ENCODE measurements at regions of chr3 and their contacts with region 1.

Region 1: GRCh38 chr3:107633327-107634098 is 110.8 kb downstream of the BBX start:
- H3K4me3 Mint-ChIP-seq: no peak overlapping the region
- H3K27ac Mint-ChIP-seq: no peak overlapping the region
- H3K4me1 Mint-ChIP-seq: peaks cover 34% of the 10 kb centered on the region
- H3K27me3 Mint-ChIP-seq: no peaks in the 10 kb centered on the region

Region 2: DNA sequence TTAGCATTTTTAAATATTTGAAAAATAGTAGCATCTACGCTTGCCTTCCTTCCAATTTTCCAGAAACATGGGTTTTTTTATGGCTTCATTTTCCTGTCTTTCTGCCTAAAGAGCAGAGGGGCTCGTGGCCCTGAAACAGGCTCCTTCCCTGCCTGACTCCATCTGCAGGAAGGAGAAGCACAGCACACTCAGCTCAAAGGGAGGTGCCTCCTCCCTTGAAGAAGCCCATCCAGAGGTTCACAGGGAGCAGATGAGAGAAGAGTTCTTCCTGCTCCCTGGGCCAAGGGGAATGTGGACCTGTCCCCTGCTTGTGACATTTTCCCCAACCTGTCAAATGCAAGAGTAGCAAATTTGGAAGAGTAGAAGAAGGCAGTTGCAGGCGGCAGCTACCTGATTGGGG is 55.0 kb before region 1 on chr3:
- intact Hi-C with region 1: no loop called
- H3K4me3 Mint-ChIP-seq: no peak overlapping the region
- H3K27ac Mint-ChIP-seq: no peak overlapping the region
- H3K4me1 Mint-ChIP-seq: peaks cover 11% of the 10 kb centered on the region
- H3K27me3 Mint-ChIP-seq: no peaks in the 10 kb centered on the region

Region 3: GRCh38 chr3:107598926-107599771 is 34.4 kb before region 1 on chr3:
- intact Hi-C with region 1: loop called (anchors 5 kb)
- H3K4me3 Mint-ChIP-seq: peak overlapping the region; percentile 66
- H3K27ac Mint-ChIP-seq: peak overlapping the region; percentile 68
- H3K4me1 Mint-ChIP-seq: peaks cover 29% of the 10 kb centered on the region
- H3K27me3 Mint-ChIP-seq: no peaks in the 10 kb centered on the region

Region 4: DNA sequence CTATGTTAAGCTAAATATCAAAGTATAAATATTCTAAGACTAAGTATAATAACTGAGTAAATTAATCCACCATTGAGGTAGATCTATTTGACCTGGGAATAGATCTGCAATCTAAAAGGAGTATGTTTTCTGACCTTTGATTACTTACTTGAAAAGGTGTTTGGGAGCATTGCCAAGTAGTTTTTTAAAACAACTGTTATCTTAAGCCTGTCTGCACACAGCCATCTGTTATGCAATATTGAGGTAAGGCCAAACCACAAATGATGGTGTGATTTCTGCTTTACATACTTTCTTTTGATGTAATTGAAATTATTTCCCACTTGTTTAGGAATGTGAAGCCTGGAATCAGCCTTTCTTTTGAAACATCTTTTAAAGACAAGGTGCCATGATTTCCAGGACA is 163.2 kb after region 1 on chr3:
- intact Hi-C with region 1: no loop called
- H3K4me3 Mint-ChIP-seq: no peak overlapping the region
- H3K27ac Mint-ChIP-seq: no peak overlapping the region
- H3K4me1 Mint-ChIP-seq: peaks cover 10% of the 10 kb centered on the region
- H3K27me3 Mint-ChIP-seq: no peaks in the 10 kb centered on the region

Region 5: DNA sequence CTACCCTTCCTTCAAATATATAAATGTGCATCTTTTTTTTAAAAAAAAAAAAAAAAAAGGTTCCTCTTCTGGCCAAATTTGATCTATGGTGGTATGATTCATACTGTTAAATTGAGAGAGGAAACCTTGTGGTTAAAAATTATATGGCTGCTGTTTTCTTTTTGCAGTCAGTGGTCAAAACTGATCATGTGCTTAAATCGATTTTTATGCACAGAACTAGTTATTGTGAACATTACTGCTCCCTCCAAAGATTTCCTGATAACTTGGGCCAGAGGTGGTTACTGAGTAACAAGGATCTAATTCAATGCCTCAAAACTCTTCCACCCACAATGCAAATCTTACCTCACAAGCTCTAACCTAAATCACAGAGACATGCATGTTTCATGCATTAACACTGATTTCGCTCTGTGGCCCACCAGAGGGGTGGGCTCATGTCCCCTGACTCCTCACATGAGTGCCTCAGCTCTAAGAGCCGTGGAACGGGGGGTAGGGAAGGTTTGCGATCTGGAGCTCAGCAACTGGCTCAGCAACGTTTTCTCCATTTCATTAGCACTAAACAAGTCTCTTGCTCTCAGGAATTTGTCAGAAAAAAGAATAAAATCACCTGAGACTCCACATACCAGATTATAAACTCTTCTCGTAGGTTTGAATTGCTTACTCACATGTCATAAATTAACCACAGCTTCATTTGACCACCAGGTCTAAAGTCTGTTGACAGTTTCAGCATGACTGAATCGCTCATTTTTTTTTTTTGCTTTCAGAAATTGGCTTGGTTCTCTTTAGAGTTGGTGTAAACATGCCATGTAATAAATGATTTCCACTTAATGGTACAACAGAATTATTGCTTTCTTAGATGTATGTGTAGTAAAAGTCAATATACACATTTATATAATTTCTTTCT is 176.9 kb after region 1 on chr3:
- intact Hi-C with region 1: no loop called
- H3K4me3 Mint-ChIP-seq: no peak overlapping the region
- H3K27ac Mint-ChIP-seq: no peak overlapping the region
- H3K4me1 Mint-ChIP-seq: peaks cover 14% of the 10 kb centered on the region
- H3K27me3 Mint-ChIP-seq: peaks cover 1% of the 10 kb centered on the region